ENCODE measurements at regions of chr3 and their contacts with region 1.

Region 1: DNA sequence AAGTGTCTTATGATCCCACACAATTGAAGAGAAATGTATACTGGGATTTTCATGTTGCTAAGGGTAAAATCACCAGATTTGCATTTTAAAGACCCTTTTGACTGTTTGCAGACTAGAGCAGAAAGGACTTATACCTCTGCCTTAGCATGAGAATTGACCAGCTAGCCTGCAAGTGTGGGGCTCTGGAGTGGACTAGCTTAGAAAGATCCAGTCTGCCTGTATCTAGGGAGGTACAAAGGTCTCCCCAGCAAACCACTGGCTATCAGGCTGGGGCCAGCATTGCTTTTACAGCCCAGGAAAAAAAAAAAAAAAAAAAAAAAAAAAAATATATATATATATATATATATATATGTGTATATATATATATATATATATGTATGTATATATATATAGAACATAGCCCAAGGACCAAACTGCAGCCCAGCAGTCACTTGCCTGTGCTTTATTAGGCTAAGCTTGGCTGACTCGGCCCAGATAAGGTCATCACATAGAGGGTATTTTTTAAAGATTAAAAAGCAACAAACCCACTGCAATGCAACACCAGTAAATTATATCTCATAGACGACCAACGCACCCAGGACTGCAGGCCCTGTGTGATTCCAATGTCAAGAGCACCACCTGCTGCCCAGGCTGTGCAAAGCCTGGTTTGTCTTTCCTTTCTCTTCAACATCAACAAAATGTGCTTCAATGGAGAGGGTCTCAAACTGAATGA is 63.7 kb downstream of the DCLK3 start:
- DNase-seq: peak; percentile 66
- H3K4me3 Mint-ChIP-seq: no peak overlapping the region
- H3K27ac Mint-ChIP-seq: no peak overlapping the region
- H3K4me1 Mint-ChIP-seq: no peaks in the 10 kb centered on the region
- H3K27me3 Mint-ChIP-seq: no peaks in the 10 kb centered on the region

Region 2: GRCh38 chr3:35616346-35616745 is 1084.3 kb before region 1 on chr3:
- CTCF ChIA-PET with region 1: no interaction called
- intact Hi-C with region 1: no loop called
- DNase-seq: no peak
- H3K4me3 Mint-ChIP-seq: no peak overlapping the region
- H3K27ac Mint-ChIP-seq: no peak overlapping the region
- H3K4me1 Mint-ChIP-seq: no peaks in the 10 kb centered on the region
- H3K27me3 Mint-ChIP-seq: no peaks in the 10 kb centered on the region

Region 3: GRCh38 chr3:35965908-35966307 is 734.8 kb before region 1 on chr3:
- CTCF ChIA-PET with region 1: interaction called, 3 read pairs
- intact Hi-C with region 1: loop called (anchors 1 kb)
- DNase-seq: no peak
- H3K4me3 Mint-ChIP-seq: no peak overlapping the region
- H3K27ac Mint-ChIP-seq: no peak overlapping the region
- H3K4me1 Mint-ChIP-seq: peaks cover 2% of the 10 kb centered on the region
- H3K27me3 Mint-ChIP-seq: no peaks in the 10 kb centered on the region

Region 4: DNA sequence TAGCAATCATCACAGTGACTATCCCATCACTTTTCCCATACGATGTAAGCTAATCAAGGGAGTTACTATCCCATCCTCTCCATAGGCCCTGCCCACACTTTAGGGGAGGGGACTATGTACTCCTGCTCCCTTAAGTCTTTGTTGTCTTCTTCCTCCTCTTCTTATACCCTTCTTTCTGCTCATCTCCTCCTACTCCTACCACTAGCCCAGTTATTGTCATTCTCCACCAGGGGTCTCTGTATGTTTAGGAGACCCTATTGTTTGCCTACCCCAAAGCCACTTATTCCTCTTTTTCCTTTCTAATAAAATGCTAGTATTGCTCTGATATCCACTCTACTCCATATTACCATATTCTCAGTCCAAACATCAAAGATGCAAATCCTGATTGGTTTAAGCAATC is 292.5 kb before region 1 on chr3:
- CTCF ChIA-PET with region 1: no interaction called
- intact Hi-C with region 1: loop called (anchors 1 kb)
- DNase-seq: no peak
- H3K4me3 Mint-ChIP-seq: no peak overlapping the region
- H3K27ac Mint-ChIP-seq: no peak overlapping the region
- H3K4me1 Mint-ChIP-seq: no peaks in the 10 kb centered on the region
- H3K27me3 Mint-ChIP-seq: no peaks in the 10 kb centered on the region

Region 5: DNA sequence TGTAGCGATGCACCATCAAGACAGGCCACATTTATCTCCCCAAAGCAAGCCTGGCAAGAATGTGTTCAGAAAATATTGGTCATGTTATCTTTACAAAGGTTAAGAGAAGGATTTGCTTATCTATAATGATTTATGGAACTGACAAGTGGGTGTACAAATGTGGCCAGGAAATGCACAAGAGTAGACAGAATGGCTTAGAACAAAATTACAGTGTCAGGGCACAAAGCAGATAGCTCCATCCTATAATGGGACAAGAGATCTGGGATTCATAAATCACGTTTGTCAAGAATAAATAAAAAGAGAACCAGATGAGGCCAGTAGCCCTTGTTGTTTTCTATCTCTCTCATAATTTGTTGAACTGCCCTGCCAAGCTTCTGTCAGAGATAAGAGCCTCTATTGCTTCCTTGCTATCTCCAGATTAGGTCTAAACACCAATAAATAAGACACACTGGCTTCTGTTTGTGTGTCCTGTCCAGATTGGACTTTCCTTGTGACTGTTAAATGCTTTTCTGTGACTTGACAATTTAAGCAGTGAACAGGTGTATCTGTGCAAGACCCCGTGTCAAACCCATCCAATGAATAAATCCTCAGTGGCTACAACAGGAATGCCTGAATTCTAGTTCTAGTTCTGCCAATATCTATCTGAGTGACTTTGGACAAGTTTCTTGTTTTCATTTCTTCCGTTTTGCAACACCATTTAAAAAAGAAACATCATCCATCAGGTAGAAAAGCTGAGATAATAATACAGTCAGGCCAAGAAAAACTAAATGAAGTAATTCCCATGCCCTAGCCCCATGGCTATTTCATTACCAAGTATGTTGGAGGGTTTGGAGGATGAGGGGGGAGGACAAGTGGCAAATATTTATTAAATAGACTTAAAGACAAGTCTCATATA is 93.6 kb before region 1 on chr3:
- CTCF ChIA-PET with region 1: interaction called, 10 read pairs
- intact Hi-C with region 1: no loop called
- DNase-seq: no peak
- H3K4me3 Mint-ChIP-seq: no peak overlapping the region
- H3K27ac Mint-ChIP-seq: no peak overlapping the region
- H3K4me1 Mint-ChIP-seq: no peaks in the 10 kb centered on the region
- H3K27me3 Mint-ChIP-seq: peaks cover 20% of the 10 kb centered on the region

Measured in activated naive CD4-positive, alpha-beta T cell treated with anti-CD3 and anti-CD28 coated beads for 36 hours (primary cell).